B cell (primary cell): ENCODE measurements at regions of chr17 and their contacts with region 1.

Region 1: DNA sequence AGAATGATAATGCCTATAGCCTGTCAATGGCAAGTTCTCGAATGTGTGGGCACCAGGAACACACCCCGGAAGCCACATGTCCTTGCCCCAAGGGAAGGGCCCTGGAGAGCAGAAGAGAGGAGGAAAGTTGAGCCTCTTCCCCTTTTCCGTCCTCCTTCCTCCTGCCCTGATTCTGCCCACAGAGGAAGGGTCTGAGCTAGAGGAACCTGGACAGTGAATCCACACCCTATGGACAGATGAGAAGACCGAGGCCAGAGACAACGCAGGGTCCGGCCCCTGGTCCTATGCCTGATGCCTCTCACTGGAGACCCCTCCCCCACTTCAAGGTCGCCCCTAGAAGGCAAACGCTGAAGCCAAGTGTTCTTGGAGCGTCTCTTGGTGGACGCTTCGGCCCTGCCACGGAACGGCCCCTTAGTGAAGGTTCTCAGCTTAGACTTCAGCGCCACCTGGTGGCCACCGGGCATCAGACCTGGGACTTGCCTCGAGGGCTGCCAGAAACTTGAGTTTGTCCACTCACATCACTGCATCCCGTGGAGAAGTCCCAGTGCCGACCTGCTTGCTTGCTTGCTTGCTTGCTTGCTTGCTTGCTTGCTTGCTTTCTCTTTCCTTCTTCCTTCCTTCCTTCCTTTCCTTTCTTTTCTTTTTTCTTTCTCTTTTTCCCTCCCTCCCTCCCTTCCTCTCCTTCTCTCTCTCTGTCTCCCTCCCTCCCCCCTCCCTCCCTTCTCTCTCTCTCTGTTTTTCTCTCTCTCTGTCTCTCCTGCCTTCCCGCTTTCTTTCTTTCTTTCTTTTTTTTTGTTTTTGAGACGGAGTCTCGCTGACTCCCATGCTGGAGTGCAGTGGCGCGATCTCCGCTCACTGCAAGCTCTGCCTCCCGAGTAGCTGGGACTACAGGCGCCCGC is 20.6 kb upstream of the SPNS3 start:
- DNase-seq: peak; percentile 91
- ATAC-seq: peak; percentile 94
- H3K4me3 ChIP-seq: peak overlapping the region in 3 of 5 experiments; percentile 13 to 34 (median 15)
- H3K4me3 Mint-ChIP-seq: peak overlapping the region; percentile 69
- H3K27ac ChIP-seq: no peak overlapping the region
- H3K27ac Mint-ChIP-seq: peak overlapping the region; percentile 76
- H3K4me1 ChIP-seq: peaks cover 4 to 7% of the 10 kb centered on the region in 2 donors
- H3K4me1 Mint-ChIP-seq: peaks cover 6% of the 10 kb centered on the region
- H3K27me3 ChIP-seq: no peaks in the 10 kb centered on the region
- H3K27me3 Mint-ChIP-seq: no peaks in the 10 kb centered on the region
- CTCF ChIP-seq: peak; percentile 86

Region 2: DNA sequence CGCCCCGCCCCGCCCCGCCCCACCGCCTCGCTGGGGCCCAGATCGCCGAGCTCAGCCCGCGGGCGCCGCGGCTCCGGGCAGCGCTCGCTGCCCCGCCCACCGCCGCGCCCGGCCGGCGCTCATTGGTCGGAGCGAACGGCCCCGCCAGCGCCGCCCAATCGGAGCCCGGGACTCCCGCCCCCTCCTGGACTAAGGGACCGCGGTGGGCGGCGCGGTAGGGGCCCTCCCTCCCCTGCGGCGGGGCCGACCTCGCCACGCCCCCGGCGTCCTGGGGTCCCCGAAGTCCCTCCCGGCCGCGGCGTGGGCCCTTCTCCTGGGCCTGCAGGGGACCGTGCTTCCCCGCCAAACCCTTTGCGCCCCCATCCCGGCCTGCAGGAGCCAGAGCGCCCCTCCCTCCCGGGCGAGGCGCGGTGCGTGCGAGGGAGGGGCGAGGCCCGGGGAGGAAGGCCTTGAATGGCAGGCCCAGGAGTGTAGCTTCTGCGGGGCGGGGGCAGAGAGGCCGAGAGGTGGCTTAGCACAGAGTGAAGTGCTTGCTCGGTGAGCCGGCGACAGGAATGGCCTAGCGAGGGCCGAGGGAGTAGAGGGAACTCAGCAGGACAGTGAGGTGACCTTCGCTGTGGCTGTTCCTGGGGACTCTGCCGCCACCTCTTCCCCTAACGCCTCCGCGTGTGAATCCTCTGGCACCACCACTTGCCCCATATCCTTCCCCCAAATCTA is 520.0 kb before region 1 on chr17 and contains the start of gene CAMKK1:
- CTCF ChIA-PET with region 1: no interaction called
- POLR2A ChIA-PET with region 1: no interaction called
- intact Hi-C with region 1: no loop called
- DNase-seq: peak; percentile 95
- ATAC-seq: peak; percentile 86
- H3K4me3 ChIP-seq: peak within 1 kb of the TSS; percentile 14 to 75 (median 64)
- H3K4me3 Mint-ChIP-seq: peak within 1 kb of the TSS; percentile 93
- H3K27ac ChIP-seq: peak within 1 kb of the TSS; percentile 56 to 57
- H3K27ac Mint-ChIP-seq: peak within 1 kb of the TSS; percentile 89
- H3K4me1 ChIP-seq: peaks cover 20 to 42% of the 10 kb centered on the region in 2 donors
- H3K4me1 Mint-ChIP-seq: peaks cover 40% of the 10 kb centered on the region
- H3K27me3 ChIP-seq: no peaks in the 10 kb centered on the region
- H3K27me3 Mint-ChIP-seq: no peaks in the 10 kb centered on the region
- CTCF ChIP-seq: no peak
- total RNA-seq, gene CAMKK1: 35.9 and 37.1 TPM in 2 replicates

Region 3: DNA sequence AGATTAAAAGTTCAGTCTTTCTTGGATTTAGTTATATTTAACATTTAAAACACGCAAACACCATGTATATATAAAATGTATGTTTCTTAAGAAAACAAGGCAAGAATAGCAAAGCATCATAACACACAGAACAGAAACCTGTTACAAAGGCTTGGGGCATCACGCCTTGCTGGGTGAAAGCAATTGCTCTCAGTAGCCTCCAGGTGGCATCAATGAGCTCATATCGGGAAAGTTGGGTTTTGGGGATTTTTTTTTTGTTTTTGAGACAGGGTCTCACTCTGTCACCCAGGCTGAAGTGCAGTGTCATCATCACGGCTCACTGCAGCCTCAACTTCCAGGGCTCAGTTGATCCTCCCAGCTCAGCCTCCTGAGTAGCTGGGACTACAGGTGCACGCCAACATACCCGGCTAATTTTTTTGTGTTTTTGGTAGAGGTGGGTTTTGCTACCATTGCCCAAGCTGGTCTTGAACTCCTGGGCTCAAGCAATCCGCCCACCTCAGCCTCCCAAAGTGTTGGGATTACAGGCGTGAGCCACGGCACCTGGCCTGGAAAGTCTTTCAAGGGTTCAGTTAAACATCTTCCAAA is 213.3 kb before region 1 on chr17:
- CTCF ChIA-PET with region 1: interaction called, 30 read pairs
- POLR2A ChIA-PET with region 1: no interaction called
- intact Hi-C with region 1: loop called (anchors 1 kb)
- DNase-seq: peak; percentile 58
- ATAC-seq: peak; percentile 70
- H3K4me3 ChIP-seq: no peak overlapping the region
- H3K4me3 Mint-ChIP-seq: no peak overlapping the region
- H3K27ac ChIP-seq: no peak overlapping the region
- H3K27ac Mint-ChIP-seq: no peak overlapping the region
- H3K4me1 ChIP-seq: no peaks in the 10 kb centered on the region
- H3K4me1 Mint-ChIP-seq: no peaks in the 10 kb centered on the region
- H3K27me3 ChIP-seq: no peaks in the 10 kb centered on the region
- H3K27me3 Mint-ChIP-seq: no peaks in the 10 kb centered on the region
- CTCF ChIP-seq: peak; percentile 85

Region 4: GRCh38 chr17:4249452-4250029 is 163.6 kb before region 1 on chr17:
- CTCF ChIA-PET with region 1: interaction called, 10 read pairs
- POLR2A ChIA-PET with region 1: no interaction called
- intact Hi-C with region 1: no loop called
- DNase-seq: peak; percentile 45
- ATAC-seq: no peak
- H3K4me3 ChIP-seq: no peak overlapping the region
- H3K4me3 Mint-ChIP-seq: no peak overlapping the region
- H3K27ac ChIP-seq: peak overlapping the region in 1 of 2 donors; percentile 23
- H3K27ac Mint-ChIP-seq: no peak overlapping the region
- H3K4me1 ChIP-seq: peaks cover 0 to 5% of the 10 kb centered on the region in 2 donors
- H3K4me1 Mint-ChIP-seq: peaks cover 28% of the 10 kb centered on the region
- H3K27me3 ChIP-seq: no peaks in the 10 kb centered on the region
- H3K27me3 Mint-ChIP-seq: no peaks in the 10 kb centered on the region
- CTCF ChIP-seq: peak; percentile 76

Region 5: DNA sequence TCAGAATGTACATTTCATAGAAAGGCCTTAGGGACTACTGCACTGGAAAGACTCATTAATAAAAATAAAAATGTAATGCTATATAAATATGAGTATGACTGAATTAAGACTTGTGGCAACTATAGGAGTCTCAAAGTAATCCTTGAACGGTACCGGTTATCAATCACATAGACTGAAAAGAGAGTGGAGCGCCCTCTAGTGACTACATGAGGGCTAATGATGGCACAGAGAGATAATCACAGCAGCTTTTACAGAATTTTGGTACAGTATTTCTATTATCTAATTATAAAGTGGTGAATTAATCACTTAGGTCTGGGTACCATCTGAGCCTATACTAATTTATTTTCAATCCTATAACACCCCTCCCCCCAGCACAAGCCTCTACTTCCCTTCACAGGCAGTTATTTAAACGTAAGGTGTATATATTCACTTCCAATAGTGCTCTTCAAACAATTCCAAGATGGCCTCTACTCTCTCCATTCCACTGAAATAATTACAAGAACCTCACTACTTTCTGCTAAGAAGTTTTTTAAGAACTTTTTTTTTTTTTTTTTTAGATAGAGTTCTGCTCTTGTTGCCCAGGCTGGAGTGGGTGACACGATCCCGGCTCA is 108.7 kb before region 1 on chr17:
- CTCF ChIA-PET with region 1: interaction called, 9 read pairs
- POLR2A ChIA-PET with region 1: no interaction called
- intact Hi-C with region 1: loop called (anchors 1 kb)
- DNase-seq: peak; percentile 70
- ATAC-seq: peak; percentile 49
- H3K4me3 ChIP-seq: no peak overlapping the region
- H3K4me3 Mint-ChIP-seq: no peak overlapping the region
- H3K27ac ChIP-seq: no peak overlapping the region
- H3K27ac Mint-ChIP-seq: no peak overlapping the region
- H3K4me1 ChIP-seq: peaks cover 9 to 11% of the 10 kb centered on the region in 2 donors
- H3K4me1 Mint-ChIP-seq: peaks cover 23% of the 10 kb centered on the region
- H3K27me3 ChIP-seq: no peaks in the 10 kb centered on the region
- H3K27me3 Mint-ChIP-seq: no peaks in the 10 kb centered on the region
- CTCF ChIP-seq: peak; percentile 89

Region 6: DNA sequence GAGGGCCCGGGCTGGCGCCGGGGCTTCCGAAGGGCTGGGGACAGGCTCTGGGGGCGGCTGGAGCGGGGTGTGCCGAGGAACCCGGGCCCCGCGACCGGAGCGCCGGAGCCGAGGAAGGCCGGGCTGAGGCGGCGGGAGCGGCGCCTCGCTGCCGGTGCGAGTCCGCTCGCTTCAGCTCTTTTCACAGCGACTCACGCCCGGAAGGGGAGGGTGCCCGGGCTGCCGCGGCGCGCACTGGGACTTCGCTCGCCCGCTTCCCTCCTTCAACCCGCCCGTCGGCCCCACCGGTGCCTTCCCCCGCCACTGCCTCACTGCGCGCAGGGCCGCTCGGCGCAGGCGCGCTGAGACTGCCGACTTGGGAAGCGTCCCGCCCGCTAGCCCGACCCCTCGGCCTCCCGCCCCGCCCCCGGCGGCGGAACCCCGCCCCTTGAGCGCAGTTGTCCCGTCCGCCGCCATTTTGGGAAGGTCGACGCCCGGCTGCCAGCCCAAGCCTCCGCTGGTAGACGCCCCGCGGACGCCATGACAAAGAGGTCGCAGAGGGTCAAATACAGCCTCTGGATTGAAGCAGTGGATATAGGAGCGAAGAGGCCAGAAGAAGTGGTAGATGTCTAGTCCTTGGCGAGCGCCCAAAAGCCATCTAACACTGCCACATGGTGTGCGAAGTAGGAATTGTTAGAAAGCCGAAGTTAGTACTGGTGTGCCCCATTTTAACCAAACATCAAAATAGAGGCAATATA is 46.7 kb before region 1 on chr17 and contains the start of gene UBE2G1:
- CTCF ChIA-PET with region 1: interaction called, 13 read pairs
- POLR2A ChIA-PET with region 1: no interaction called
- intact Hi-C with region 1: loop called (anchors 1 kb)
- DNase-seq: peak; percentile 99
- ATAC-seq: peak; percentile 81
- H3K4me3 ChIP-seq: peak within 1 kb of the TSS; percentile 50 to 97 (median 90)
- H3K4me3 Mint-ChIP-seq: peak within 1 kb of the TSS; percentile 87
- H3K27ac ChIP-seq: peak within 1 kb of the TSS; percentile 63 to 89
- H3K27ac Mint-ChIP-seq: peak within 1 kb of the TSS; percentile 93
- H3K4me1 ChIP-seq: peaks cover 10 to 34% of the 10 kb centered on the region in 2 donors
- H3K4me1 Mint-ChIP-seq: peaks cover 44% of the 10 kb centered on the region
- H3K27me3 ChIP-seq: no peaks in the 10 kb centered on the region
- H3K27me3 Mint-ChIP-seq: no peaks in the 10 kb centered on the region
- CTCF ChIP-seq: no peak
- total RNA-seq, gene UBE2G1: 76.0 and 78.1 TPM in 2 replicates

Region 7: GRCh38 chr17:4394208-4395110 is 18.7 kb before region 1 on chr17:
- CTCF ChIA-PET with region 1: interaction called, 5 read pairs
- POLR2A ChIA-PET with region 1: interaction called, 3 read pairs
- intact Hi-C with region 1: loop called (anchors 1 kb)
- DNase-seq: no peak
- ATAC-seq: no peak
- H3K4me3 ChIP-seq: no peak overlapping the region
- H3K4me3 Mint-ChIP-seq: peak overlapping the region; percentile 33
- H3K27ac ChIP-seq: no peak overlapping the region
- H3K27ac Mint-ChIP-seq: peak overlapping the region; percentile 74
- H3K4me1 ChIP-seq: peaks cover 32 to 52% of the 10 kb centered on the region in 2 donors
- H3K4me1 Mint-ChIP-seq: peaks cover 42% of the 10 kb centered on the region
- H3K27me3 ChIP-seq: no peaks in the 10 kb centered on the region
- H3K27me3 Mint-ChIP-seq: no peaks in the 10 kb centered on the region
- CTCF ChIP-seq: no peak

Region 8: DNA sequence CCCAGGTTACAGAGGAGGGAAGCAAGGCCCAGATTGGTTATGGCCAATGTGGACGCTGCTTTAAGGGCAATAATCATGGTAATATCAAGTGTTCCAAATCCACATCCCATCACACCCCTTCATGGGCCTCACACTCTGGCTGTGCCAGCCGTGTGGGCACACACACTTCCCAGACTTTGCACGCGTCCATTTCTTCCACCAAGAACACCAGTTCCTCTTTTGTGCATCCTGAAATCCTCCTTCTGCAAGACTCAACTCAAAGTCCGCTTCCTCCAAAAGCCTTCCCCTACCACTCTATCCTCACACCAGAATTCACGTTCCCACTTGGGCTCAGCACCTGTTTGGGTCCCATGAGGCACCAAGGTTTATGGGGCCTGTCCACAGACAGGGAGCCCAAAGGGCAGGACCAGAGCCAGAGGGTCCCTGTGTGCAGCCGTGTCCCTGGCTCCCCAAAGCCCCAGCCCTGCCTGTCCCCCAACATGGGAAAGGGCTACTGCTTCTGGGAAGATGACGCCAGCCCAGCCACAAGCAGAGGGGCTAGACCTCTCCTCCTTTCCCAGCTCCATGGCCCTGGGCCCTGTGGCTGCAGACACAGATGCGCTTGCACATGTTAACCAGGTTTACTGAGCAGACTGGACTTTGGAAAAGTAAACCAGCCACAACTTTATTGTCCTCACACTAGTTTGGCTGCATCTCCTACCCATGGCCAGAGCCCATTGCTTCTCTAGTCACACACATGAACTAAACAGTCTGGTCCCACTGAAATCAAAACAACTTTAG is 40.8 kb after region 1 on chr17:
- CTCF ChIA-PET with region 1: no interaction called
- POLR2A ChIA-PET with region 1: no interaction called
- intact Hi-C with region 1: no loop called
- DNase-seq: no peak
- ATAC-seq: no peak
- H3K4me3 ChIP-seq: no peak overlapping the region
- H3K4me3 Mint-ChIP-seq: no peak overlapping the region
- H3K27ac ChIP-seq: no peak overlapping the region
- H3K27ac Mint-ChIP-seq: no peak overlapping the region
- H3K4me1 ChIP-seq: no peaks in the 10 kb centered on the region
- H3K4me1 Mint-ChIP-seq: no peaks in the 10 kb centered on the region
- H3K27me3 ChIP-seq: no peaks in the 10 kb centered on the region
- H3K27me3 Mint-ChIP-seq: peaks cover 8% of the 10 kb centered on the region
- CTCF ChIP-seq: no peak

Region 9: GRCh38 chr17:4492721-4493561 is 79.8 kb after region 1 on chr17:
- CTCF ChIA-PET with region 1: no interaction called
- POLR2A ChIA-PET with region 1: no interaction called
- intact Hi-C with region 1: no loop called
- DNase-seq: no peak
- ATAC-seq: peak; percentile 16
- H3K4me3 ChIP-seq: no peak overlapping the region
- H3K4me3 Mint-ChIP-seq: peak overlapping the region; percentile 5
- H3K27ac ChIP-seq: no peak overlapping the region
- H3K27ac Mint-ChIP-seq: peak overlapping the region; percentile 16
- H3K4me1 ChIP-seq: peaks cover 9 to 21% of the 10 kb centered on the region in 2 donors
- H3K4me1 Mint-ChIP-seq: peaks cover 25% of the 10 kb centered on the region
- H3K27me3 ChIP-seq: peaks cover 0 to 2% (median 0%) of the 10 kb centered on the region in 4 experiments
- H3K27me3 Mint-ChIP-seq: no peaks in the 10 kb centered on the region
- CTCF ChIP-seq: no peak